PC-3 (cell line): ENCODE measurements at regions of chr5 and their contacts with region 1.

Region 1: DNA sequence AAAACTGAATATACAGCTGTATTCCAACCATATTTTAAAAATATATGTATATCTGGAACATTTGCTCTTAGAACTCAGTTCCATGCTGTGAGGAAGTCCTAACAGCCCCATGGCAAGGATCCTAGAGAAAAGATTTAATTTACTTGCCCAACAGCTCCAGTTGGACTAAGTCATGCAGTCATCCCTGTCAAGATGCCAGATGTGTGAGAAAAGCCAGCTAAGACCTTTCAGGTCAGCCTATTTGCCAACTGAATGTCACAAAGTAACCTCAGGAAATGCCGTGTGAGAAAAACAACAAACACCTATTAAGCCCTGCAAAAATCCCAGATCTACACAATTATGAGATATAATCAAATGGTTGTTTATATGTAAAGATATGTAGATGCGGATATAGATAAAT is 416.3 kb downstream of the NR2F1-AS1 start:
- DNase-seq: peak; percentile 95
- ATAC-seq: peak; percentile 10; the same call in 1 of the 2 replicates
- H3K4me3 ChIP-seq: no peak overlapping the region
- H3K27ac ChIP-seq: peak overlapping the region; percentile 93
- H3K4me1 ChIP-seq: peaks cover 56% of the 10 kb centered on the region
- H3K27me3 ChIP-seq: no peaks in the 10 kb centered on the region
- CTCF ChIP-seq: no peak

Region 2: DNA sequence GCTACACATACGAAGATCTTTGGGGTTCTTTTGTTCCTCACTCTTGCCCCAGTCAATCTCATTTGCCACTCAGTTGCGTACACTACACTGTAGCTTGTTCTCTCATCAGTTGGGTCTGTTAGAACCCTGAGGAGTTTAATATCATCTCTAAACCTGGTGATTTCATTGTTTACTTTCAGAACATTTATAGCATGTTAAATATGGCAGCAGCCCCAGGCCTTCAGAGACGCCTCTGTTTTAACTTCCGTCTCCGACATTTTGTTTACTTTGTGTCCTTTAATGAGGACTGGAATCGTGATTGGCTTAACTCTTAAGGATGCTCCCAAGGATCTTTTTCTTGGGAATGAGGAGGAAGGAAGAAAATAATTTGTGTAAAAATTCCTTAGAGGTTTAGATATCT is 93.8 kb before region 1 on chr5:
- CTCF ChIA-PET with region 1: no interaction called
- POLR2A ChIA-PET with region 1: no interaction called
- intact Hi-C with region 1: no loop called
- DNase-seq: peak; percentile 51
- ATAC-seq: peak; percentile 89
- H3K4me3 ChIP-seq: no peak overlapping the region
- H3K27ac ChIP-seq: peak overlapping the region; percentile 88
- H3K4me1 ChIP-seq: peaks cover 37% of the 10 kb centered on the region
- H3K27me3 ChIP-seq: no peaks in the 10 kb centered on the region
- CTCF ChIP-seq: no peak

Region 3: GRCh38 chr5:93092349-93093105 is 72.2 kb before region 1 on chr5:
- CTCF ChIA-PET with region 1: interaction called, 4 read pairs
- POLR2A ChIA-PET with region 1: no interaction called
- intact Hi-C with region 1: loop called (anchors 5 kb)
- DNase-seq: peak; percentile 65
- ATAC-seq: peak; percentile 87
- H3K4me3 ChIP-seq: no peak overlapping the region
- H3K27ac ChIP-seq: peak overlapping the region; percentile 24; the same call in 1 of the 2 replicates
- H3K4me1 ChIP-seq: peaks cover 14% of the 10 kb centered on the region
- H3K27me3 ChIP-seq: no peaks in the 10 kb centered on the region
- CTCF ChIP-seq: peak; percentile 74

Region 4: DNA sequence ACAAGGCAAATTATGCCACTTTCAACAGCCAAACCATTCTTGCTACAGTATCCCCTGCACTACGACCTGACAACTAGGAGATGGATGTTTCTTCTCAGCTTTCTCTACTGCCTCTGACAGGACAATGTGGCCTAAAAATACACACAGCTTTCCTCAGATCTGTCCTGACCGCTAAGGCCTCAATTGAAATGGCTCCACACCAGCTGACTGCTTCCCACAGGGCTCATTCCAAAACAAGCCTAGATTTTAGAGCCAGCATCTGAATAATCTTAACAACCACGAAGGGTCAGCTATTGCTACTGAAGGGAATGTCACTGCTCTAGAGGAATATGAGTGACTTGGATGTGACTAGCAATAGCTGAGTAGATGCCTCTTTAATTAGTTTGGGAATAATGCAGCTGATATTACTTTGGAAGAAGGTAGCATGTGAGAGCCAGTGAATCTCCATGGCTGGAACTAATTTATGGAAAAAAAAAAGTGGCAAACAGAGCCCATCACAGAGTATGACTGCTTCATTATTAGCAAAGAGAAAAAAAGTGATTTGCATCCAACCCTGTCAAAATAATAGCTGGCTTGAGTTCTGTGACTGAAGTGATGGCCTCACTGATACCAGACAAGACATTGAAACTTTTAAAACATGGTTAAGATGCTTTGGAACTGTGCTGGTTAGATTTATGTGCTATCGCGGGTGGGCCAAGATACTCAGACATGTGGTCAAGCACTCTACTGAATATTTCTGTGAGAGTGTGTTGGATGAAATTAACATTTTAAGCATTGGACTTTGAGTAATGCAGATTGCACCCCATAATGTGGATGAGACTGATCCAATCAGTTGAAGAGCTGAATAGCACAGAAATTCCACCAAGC is 33.8 kb before region 1 on chr5:
- CTCF ChIA-PET with region 1: interaction called, 3 read pairs
- POLR2A ChIA-PET with region 1: no interaction called
- intact Hi-C with region 1: loop called (anchors 1 kb)
- DNase-seq: no peak
- ATAC-seq: no peak
- H3K4me3 ChIP-seq: no peak overlapping the region
- H3K27ac ChIP-seq: no peak overlapping the region
- H3K4me1 ChIP-seq: peaks cover 18% of the 10 kb centered on the region
- H3K27me3 ChIP-seq: no peaks in the 10 kb centered on the region
- CTCF ChIP-seq: no peak

Region 5: DNA sequence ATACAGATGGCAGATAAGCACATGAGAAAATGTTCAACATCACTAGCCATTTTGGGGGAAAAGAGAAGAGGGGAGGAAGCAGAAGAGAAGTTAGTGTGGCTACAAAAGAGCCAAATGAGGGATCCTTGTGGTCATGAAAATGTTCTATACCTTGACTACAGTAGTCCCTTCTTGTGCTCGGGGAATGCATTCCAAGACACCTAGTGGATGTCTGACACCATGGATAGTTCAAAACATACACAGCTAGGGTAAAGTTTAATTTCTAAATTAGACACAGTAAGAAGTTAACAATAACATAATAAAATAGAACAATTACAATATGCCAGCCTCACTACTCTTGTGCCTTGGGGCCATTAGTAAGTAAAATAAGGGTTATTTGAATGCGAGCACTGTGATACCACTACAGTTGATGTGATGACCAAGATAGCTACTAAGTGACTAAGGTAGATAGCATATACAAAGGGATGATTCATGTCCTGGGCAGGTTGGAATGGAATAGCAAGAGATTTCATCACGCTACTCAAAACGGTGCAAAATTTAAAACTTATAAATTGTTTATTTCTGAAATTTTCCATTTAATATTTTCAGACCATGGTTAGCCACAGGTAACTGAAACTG is 72.2 kb after region 1 on chr5:
- CTCF ChIA-PET with region 1: no interaction called
- POLR2A ChIA-PET with region 1: no interaction called
- intact Hi-C with region 1: loop called (anchors 5 kb)
- DNase-seq: peak; percentile 90
- ATAC-seq: peak; percentile 90
- H3K4me3 ChIP-seq: no peak overlapping the region
- H3K27ac ChIP-seq: peak overlapping the region; percentile 73
- H3K4me1 ChIP-seq: peaks cover 45% of the 10 kb centered on the region
- H3K27me3 ChIP-seq: no peaks in the 10 kb centered on the region
- CTCF ChIP-seq: peak; percentile 35; the same call in 1 of the 2 replicates

Region 6: GRCh38 chr5:93349613-93350012 is 184.9 kb after region 1 on chr5:
- CTCF ChIA-PET with region 1: no interaction called
- POLR2A ChIA-PET with region 1: no interaction called
- intact Hi-C with region 1: loop called (anchors 1 kb)
- DNase-seq: peak; percentile 95
- ATAC-seq: peak; percentile 97
- H3K4me3 ChIP-seq: no peak overlapping the region
- H3K27ac ChIP-seq: peak overlapping the region; percentile 78
- H3K4me1 ChIP-seq: peaks cover 19% of the 10 kb centered on the region
- H3K27me3 ChIP-seq: no peaks in the 10 kb centered on the region
- CTCF ChIP-seq: no peak

Region 7: DNA sequence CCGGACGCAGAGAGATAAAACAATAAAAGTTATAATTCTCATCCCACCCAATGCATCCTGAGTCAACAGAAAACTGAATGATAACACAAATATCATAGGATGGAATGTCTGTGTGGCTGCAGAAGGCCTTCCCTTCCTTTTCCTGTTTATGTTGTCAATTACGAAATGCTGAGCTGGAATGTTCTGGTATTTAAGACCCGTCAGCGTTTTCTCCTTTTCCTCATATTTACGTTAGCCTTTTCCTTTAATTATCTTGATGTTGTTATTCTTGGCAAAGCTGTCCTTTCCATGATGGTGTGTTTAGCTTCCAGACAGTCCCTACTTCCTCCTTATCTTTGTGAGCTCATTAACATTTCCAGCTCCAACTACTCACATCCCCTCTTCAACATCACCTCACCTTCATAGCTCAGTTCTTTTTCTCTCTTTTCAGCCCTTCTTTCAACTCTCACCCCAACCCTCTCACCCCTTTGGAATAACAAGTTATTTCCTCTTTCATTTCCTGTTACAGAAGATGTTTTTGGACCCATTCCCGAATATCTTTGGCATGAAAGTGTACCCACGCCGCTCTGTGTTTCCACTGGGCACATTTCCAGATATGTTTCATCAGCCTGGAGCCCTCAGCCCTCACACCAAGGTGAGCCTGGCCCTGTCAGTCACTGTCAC is 194.7 kb after region 1 on chr5:
- CTCF ChIA-PET with region 1: no interaction called
- POLR2A ChIA-PET with region 1: no interaction called
- intact Hi-C with region 1: loop called (anchors 2 kb)
- DNase-seq: peak; percentile 98
- ATAC-seq: peak; percentile 58
- H3K4me3 ChIP-seq: peak overlapping the region; percentile 40
- H3K27ac ChIP-seq: peak overlapping the region; percentile 78
- H3K4me1 ChIP-seq: peaks cover 58% of the 10 kb centered on the region
- H3K27me3 ChIP-seq: no peaks in the 10 kb centered on the region
- CTCF ChIP-seq: no peak